ENCODE measurements at regions of chr4 and their contacts with region 1.

Region 1: DNA sequence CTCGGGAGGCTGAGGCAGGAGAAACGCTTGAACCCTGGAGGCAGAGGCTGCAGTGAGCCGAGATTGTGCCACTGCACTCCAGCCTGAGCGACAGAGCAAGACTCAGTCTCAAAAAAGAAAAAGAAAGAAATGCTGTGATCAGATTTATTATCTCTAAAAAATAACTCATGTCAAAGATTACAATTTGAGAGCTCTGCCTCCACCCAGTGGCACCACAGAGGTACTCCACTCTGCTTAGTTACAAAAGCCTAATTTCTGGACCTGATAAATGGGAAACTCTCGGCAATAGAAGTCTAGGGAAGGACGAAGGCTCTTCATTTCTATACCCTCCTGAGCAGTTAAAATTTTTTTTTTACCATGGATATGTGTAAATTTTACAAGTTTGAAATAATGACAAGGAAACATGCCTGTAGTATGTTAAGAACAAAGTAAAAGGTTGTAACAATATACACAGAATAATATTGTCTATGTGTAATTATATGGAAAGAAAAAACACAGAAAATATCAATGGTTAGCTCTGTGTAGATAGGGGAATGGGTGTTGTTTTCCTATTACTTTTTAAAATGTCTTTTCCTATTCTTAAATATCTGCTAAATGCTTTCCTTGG is 149.8 kb downstream of the STIM2 start:
- DNase-seq: peak; percentile 58 to 69 (median 68)
- ATAC-seq: peak; percentile 72 to 76
- H3K4me3 ChIP-seq: no peak overlapping the region
- H3K27ac ChIP-seq: no peak overlapping the region
- H3K4me1 ChIP-seq: no peaks in the 10 kb centered on the region
- H3K27me3 ChIP-seq: no peaks in the 10 kb centered on the region

Region 2: DNA sequence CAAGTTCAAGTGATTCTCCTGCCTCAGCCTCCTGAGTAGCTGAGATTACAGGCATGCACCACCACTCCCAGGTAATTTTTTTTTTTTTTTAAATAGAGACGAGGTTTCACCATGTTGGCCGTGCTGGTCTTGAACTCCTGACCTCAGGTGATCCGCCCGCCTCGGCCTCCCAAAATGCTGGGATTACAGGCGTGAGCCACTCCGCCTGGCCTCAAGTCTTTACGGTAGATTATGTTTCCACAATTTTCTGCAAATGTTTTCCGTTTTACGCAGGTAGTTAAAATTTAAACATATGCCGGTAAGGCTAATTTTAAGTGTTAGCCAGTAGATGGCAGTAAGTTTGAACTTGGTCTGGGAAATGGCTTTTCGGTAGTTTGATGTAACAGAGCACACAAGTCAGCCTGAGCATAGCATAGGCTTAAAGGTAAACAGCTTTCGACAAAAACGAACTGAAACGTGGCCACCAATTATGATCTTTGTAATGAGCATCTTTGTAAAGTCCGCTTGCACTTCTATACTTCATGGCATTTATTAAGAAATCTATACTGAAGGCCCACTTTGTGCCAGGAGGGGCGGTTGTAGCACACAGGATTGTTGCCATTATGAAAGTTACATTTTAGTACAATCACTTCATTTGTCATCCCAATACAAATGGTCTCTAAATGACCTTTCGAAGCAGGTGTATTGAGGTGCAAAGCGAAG is 551.2 kb before region 1 on chr4:
- intact Hi-C with region 1: loop called in 2 of 4 experiments (anchors 10 kb)
- DNase-seq: no peak
- ATAC-seq: peak; percentile 59 to 61
- H3K4me3 ChIP-seq: no peak overlapping the region
- H3K27ac ChIP-seq: no peak overlapping the region
- H3K4me1 ChIP-seq: no peaks in the 10 kb centered on the region
- H3K27me3 ChIP-seq: no peaks in the 10 kb centered on the region

Region 3: DNA sequence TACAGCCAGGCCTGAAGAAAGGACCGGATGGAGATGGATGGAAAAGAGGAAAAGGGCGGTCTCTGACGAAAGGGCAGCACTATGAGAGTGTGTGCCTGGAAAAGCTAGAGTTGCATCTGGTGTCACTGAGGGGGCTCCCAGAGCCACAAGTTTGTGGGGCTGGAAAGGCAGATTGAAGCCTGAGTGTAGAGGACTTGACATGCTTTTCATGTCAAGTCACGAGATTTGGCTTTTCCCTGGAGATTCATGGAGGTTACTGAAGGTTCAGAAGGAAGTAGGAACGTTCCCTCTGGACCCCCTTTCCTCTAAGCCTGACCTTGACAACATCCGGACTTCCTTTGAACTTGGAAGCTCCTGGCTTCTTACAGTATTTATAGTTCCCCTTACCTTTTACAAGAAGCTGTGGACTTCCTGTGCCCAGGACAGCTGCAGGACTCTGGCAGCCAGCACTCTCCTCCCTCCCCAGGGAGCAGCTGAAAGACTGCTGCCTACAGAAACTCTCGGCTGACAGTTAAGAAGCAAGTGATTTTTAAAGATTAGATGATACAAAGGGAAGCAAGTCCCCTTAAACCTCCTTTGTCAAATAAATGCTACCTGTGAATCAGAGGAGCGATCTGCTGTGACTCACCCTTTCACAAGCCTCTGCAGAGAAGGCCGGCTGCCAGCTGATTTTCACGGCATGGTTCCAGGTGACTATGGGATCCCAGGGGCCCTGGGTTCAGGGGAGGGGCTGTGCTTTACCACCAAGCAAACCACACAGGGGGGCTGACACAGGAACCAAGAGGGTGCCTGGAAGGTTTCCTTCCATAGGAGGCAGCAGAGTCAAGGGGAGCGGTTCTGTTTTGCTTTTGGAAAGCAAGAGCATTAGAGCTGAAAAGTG is 222.7 kb before region 1 on chr4:
- intact Hi-C with region 1: loop called in 2 of 4 experiments (anchors 5 to 10 kb)
- DNase-seq: peak; percentile 33 to 62 (median 57)
- ATAC-seq: peak; percentile 60 to 80
- H3K4me3 ChIP-seq: no peak overlapping the region
- H3K27ac ChIP-seq: peak overlapping the region; percentile 1
- H3K4me1 ChIP-seq: peaks cover 4% of the 10 kb centered on the region
- H3K27me3 ChIP-seq: no peaks in the 10 kb centered on the region

Measured in right cardiac atrium (tissue), 5 donors.